Activated CD4-positive, alpha-beta T cell treated with anti-CD3 and anti-CD28 coated beads, Interleukin-2, amount 10 ng/mL, durations not matched to agents 24 days and 14 days (primary cell): ENCODE measurements at regions of chr3 and their contacts with region 1.

Region 1: DNA sequence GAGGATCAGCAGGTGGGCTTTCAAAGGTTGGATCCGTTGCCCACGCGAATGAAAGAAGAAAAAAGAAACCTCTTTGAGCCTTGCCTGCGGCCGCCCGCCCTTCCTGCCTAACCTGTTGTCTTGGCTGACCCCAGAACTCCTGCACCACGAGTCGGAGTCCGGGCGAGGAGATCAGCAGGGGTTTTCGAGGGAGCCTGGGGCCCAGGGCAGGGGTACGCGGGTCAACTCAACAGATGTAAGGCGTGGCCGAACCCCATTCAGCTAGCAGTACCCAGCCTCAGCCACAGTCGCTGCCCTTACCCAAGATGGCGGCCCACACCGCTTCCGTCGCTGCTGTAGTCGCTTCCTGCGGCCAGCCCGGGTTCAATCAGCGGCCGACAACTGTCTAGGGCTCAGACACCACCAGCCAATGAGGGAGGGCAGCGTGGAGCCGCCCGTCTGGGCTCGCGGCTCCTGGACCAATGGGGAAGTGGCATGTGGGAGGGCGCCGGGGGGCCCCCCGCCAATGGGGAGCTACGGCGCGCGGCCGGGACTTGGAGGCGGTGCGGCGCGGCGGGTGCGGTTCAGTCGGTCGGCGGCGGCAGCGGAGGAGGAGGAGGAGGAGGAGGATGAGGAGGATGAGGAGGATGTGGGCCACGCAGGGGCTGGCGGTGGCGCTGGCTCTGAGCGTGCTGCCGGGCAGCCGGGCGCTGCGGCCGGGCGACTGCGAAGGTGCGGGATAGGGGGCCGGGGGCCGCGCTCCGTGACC is at the start of gene MANF:
- DNase-seq: peak; percentile 99
- H3K4me3 Mint-ChIP-seq: peak within 1 kb of the TSS; percentile 95
- H3K27ac Mint-ChIP-seq: peak within 1 kb of the TSS; percentile 99
- H3K4me1 Mint-ChIP-seq: peaks cover 40% of the 10 kb centered on the region
- H3K27me3 Mint-ChIP-seq: no peaks in the 10 kb centered on the region
- total RNA-seq, gene MANF: 218 and 229 TPM in 2 replicates

Region 2: DNA sequence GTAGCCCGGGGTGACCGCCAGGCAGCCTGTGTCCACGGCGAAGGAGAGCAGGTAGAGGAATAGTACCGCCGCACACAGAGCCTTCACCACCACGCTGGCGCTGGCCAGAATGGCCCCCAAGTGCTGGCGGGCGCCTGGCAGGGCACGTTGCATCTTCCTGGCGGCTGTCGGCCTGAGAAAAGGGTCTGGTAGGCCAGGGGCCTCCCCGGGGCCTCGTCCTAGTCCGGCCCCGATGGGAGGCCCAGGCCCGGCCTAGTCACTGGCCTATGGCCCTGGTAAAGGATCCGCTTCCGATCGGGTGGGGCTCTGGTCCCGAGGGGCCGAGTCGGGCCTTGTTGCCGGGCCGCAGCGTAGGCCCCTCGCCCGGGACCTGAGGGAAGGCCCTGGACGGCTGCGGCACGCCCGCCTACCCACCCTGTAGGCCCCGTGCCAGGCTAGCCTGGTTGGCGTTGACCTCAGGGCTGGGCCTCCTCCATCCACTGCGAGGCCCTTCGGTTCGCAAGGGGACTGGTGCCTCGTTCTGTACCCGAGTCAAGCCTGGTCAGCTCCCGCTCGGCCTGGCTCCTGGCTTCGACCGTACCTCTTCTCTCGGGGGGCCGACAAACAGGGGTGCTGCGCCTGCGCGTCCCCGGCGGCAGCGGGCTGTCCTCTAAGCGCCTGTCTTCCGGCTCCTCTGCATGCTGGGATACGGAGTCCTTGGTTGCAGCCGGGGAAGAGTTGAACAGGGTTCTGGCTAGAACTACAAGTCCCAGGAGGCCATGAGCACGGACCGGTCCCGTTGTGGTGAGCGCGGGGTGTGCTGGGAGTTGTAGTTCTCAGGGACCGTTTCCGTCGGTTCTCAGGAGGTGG is 1025.8 kb before region 1 on chr3 and contains the start of gene TMEM115:
- intact Hi-C with region 1: loop called (anchors 5 kb)
- DNase-seq: peak; percentile 98
- H3K4me3 Mint-ChIP-seq: peak within 1 kb of the TSS; percentile 98
- H3K27ac Mint-ChIP-seq: peak within 1 kb of the TSS; percentile 95
- H3K4me1 Mint-ChIP-seq: peaks cover 35% of the 10 kb centered on the region
- H3K27me3 Mint-ChIP-seq: no peaks in the 10 kb centered on the region
- total RNA-seq, gene TMEM115: 20.3 and 20.5 TPM in 2 replicates

Region 3: DNA sequence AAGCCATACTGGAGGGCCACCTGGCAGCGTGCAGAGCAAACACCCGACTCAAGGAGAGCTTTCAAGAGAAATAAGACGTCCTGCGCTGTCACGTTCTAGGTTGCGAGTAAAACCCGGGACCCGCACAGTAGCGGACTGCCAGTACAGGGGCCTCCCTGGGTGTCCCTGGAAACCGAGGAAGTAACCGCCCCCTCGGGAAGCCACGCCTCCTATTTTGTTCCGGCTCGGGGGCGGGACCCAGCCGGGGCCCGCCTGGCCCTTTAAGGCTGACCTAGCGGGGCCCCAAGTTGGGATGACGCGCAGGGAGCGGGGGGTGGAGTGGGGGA is 768.2 kb before region 1 on chr3:
- intact Hi-C with region 1: loop called (anchors 1 kb)
- DNase-seq: peak; percentile 99
- H3K4me3 Mint-ChIP-seq: peak overlapping the region; percentile 91
- H3K27ac Mint-ChIP-seq: peak overlapping the region; percentile 89
- H3K4me1 Mint-ChIP-seq: peaks cover 63% of the 10 kb centered on the region
- H3K27me3 Mint-ChIP-seq: no peaks in the 10 kb centered on the region

Region 4: DNA sequence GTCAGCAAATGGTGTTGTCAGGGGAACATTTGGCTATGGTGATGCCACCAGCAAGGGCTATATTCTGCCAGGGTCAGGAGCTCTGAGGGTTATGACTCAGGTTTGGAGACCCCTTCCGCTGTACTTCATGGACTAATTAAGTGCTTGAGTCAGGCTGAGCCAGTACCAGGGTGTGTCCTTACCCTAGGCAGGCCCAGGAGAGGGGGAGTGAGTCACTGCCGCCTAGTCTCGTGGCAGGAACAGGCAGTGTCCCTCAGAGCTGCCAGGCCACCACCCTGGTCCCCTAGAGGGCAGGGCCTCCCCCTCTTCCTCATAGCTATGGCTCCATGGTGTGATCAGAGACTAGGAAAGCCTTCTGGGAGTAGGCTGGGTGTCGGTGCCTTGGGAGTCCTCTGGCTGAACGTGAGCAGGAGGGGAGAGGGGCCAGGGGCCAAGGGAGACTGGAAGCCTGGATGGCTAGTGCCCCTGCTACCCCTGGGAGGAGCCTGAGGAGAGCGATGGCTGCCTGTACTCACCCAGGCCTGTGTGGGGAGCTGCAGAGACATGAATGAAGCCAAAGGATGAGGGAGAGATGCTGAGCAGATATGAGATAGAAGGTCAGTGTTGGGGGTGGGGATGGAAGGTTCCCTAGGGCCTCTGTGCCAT is 757.4 kb before region 1 on chr3:
- intact Hi-C with region 1: no loop called
- DNase-seq: peak; percentile 69
- H3K4me3 Mint-ChIP-seq: peak overlapping the region; percentile 15
- H3K27ac Mint-ChIP-seq: peak overlapping the region; percentile 75
- H3K4me1 Mint-ChIP-seq: peaks cover 89% of the 10 kb centered on the region
- H3K27me3 Mint-ChIP-seq: no peaks in the 10 kb centered on the region

Region 5: DNA sequence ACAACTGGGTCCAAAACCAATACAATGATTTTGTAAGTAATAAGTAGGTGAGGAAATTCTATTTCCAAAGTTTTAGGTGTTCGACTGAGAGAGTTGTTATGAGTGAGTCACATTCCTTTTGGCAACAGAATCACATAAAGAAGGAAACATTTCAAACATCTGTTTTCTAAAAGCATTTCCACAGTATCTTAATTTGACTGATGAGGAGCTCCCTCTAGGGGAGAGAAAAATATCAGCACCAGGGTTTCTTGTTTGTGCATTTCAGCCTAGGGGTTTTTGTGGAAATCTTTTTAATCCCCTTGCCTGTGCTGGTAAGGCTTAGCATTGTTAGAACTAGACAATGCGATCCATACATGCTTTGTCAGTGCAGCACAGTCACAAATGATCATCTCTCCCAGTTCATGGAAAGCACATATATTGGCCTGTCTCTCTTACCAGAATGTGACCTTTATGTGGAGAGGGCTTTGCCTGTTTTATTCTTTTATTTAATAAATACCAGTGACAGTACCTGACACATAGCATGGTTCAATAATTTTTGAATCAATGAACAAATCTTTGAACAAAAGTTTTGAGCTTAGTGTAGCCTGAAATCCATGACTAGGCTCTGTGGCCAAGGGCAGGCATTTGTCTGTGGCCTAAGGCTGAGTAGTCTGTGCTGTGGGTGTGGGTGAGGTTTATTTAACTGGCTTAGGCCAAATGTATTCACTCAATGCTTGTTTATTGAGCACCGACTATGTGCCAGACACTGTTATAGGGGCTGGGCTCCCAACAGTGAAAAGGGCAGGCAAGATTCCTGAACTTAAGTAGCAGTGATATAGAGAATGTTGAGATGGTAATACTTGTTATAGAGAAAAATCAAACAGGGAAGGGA is 415.2 kb after region 1 on chr3:
- intact Hi-C with region 1: loop called (anchors 10 kb)
- DNase-seq: peak; percentile 86
- H3K4me3 Mint-ChIP-seq: no peak overlapping the region
- H3K27ac Mint-ChIP-seq: no peak overlapping the region
- H3K4me1 Mint-ChIP-seq: peaks cover 42% of the 10 kb centered on the region
- H3K27me3 Mint-ChIP-seq: peaks cover 9% of the 10 kb centered on the region